Activated CD4-positive, alpha-beta memory T cell treated with anti-CD3 and anti-CD28 coated beads for 36 hours (primary cell): ENCODE measurements at regions of chr17 and their contacts with region 1.

Region 1: DNA sequence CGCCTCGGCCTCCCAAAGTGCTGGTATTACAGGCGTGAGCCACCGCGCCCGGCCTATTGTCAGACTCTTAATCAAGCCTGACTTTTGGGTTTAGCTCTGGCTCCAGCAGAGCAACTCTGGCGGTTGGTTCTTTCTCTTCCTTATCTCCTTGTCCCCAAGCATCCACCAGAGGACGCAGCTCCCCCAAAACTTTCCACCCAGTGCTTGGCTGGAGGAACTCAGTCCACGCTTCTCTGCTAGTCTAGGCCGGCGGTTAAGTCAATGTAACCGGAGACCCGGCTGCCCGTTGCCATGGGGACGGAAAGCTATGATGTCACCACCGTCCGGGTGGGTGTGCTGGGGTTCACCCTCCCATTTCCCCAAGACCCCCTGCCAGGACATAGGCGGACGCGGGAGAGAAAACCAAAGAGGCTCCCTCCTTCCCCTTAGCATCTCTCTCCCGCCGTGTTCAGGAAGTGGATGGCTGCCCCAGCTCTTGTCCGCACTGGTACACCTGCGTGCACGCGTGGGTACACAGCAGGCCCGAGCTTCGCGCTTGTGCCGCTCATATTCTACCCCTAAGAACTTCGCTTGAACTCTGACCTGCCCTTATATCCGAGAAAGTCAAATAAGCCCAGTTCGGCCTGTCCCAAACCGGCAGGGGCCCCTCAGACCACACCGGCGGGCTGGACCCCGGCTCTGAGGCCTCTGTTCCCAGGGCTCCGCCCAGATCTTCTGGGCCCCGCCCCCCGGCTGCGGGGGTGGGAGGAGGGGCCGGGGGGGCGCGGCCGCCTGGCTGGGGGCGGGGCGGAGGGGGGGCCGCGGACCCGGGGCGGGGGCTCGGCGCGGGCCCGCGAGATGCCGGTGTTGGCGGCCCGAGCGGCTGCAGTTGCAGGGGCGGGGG is at the start of gene RND2:
- DNase-seq: peak; percentile 88
- H3K4me3 Mint-ChIP-seq: peak within 1 kb of the TSS; percentile 74
- H3K27ac Mint-ChIP-seq: peak within 1 kb of the TSS; percentile 21
- H3K4me1 Mint-ChIP-seq: peaks cover 21% of the 10 kb centered on the region
- H3K27me3 Mint-ChIP-seq: no peaks in the 10 kb centered on the region
- total RNA-seq, gene RND2: 0.07 TPM in 1 of 2 experiments, not detected in the other

Region 2: DNA sequence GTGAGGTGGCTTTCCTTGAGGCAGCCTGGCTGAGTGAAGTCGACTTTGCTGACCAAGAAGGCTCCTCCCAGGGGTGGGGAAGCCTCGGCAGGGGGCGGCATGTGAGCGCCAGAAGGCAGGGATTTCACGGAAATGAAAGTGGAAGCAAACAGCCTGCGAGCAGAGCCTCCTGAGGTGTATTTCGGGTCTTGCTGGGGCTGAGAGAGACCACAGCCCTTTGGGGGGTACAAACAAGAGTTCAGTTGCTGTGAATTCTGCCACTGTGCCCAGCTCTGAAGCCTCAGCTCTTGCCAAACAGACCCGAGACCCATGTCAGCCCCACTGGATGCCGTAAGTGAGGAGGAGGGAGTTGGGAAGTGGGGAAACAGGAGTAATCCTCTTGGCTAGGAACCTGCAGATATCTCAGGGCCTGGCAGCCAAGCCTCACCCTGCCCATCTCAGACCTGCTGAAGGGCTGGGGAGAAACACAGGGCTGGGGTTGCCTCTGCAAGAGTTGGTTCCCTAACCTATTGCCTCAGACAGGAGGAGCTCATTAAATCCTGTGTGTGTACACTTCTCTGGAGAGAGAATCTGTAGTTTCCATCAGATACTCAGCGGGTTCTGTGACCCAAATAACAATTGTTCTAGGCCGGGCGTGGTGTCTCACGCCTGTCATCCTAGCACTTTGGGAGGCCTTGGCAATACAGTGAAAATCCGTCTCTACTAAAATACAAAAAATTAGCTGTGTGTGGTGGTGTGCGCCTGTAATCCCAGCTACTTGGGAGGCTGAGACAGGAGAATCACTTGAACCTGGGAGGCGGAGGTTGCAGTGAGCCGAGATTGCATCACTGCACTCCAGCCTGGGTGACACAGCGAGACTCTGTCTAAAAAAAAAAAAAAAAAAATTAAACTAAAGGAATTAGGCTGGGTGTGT is 17.8 kb before region 1 on chr17 and contains the start of gene IFI35:
- CTCF ChIA-PET with region 1: interaction called, 10 read pairs
- POLR2A ChIA-PET with region 1: interaction called, 4 read pairs
- intact Hi-C with region 1: loop called (anchors 2 kb)
- DNase-seq: peak; percentile 94
- H3K4me3 Mint-ChIP-seq: peak within 1 kb of the TSS; percentile 100
- H3K27ac Mint-ChIP-seq: peak within 1 kb of the TSS; percentile 99
- H3K4me1 Mint-ChIP-seq: peaks cover 17% of the 10 kb centered on the region
- H3K27me3 Mint-ChIP-seq: no peaks in the 10 kb centered on the region
- total RNA-seq, gene IFI35: 66.0 to 68.6 TPM

Region 3: GRCh38 chr17:43125133-43125966 is 100.7 kb after region 1 on chr17 and contains the start of gene BRCA1:
- CTCF ChIA-PET with region 1: interaction called, 3 read pairs
- POLR2A ChIA-PET with region 1: no interaction called
- intact Hi-C with region 1: loop called (anchors 10 kb)
- DNase-seq: peak; percentile 97
- H3K4me3 Mint-ChIP-seq: peak within 1 kb of the TSS; percentile 97
- H3K27ac Mint-ChIP-seq: peak within 1 kb of the TSS; percentile 95
- H3K4me1 Mint-ChIP-seq: peaks cover 34% of the 10 kb centered on the region
- H3K27me3 Mint-ChIP-seq: no peaks in the 10 kb centered on the region
- total RNA-seq, gene BRCA1: 92.8 to 103 TPM

Region 4: DNA sequence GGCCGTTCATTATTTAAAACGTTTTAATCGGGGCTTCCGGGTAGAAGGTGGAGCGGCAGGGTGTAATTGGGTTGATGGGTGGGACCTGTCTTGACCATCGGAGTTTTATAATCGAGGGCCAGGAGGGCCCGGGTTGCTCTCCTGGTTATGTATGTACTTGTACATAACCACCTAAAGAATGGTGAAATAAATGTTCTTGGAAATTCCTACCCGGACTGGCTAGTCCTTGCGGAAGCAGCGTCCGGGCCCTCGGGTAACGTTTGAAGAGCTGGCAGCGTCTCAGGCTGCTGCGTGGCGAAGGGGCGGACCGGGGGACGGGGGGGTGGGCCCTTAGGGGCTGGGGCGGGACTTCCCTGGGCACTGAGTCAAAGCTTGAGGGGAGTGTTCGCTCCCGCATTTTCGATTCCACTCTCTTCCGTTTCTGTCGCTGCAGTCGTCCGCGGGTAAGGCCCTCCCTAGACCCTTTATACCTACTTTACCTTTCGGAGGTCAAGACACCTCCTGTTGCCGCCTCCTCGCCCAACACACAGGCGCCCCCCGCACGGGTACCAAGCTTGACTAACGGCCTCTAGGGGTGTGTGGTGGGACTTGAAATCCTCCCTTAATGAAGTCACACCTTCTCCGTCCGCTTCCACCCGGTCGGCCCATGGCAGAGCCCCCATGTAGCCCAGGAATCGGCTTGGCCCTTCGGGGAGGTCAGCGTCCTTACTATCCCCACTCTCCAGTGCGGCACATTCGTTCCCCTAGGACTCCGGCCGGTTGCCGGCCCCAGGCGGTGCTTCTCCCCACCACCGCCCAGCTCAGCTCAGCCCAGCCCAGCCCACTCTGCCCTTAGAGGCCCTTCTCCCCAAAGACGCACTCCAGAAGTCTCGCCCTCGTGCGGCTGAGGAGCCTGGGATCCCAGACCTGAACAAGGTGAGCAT is 187.1 kb after region 1 on chr17 and contains the start of gene TMEM106A:
- CTCF ChIA-PET with region 1: interaction called, 3 read pairs
- POLR2A ChIA-PET with region 1: interaction called, 4 read pairs
- intact Hi-C with region 1: loop called (anchors 5 kb)
- DNase-seq: peak; percentile 85
- H3K4me3 Mint-ChIP-seq: peak within 1 kb of the TSS; percentile 88
- H3K27ac Mint-ChIP-seq: peak within 1 kb of the TSS; percentile 82
- H3K4me1 Mint-ChIP-seq: peaks cover 27% of the 10 kb centered on the region
- H3K27me3 Mint-ChIP-seq: no peaks in the 10 kb centered on the region
- total RNA-seq, gene TMEM106A: 10.1 to 10.4 TPM

Region 5: DNA sequence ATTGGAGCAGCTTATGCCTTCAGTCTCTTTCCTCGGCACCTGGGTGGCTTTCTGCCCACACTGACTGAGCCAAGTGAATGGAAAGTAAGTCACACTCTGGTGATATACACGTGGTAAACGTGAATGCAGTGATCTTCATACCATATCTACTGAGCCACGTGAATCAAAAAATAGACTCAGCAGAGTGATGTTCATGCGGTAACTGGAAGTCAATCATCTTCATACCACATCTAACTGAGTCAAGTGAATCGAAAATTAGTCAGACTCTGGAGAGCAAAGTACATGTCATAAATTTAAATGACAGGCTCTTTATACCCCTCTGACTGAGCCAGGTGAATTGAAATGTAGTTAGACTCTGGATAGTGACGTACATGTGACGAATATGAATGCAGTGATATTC is 327.0 kb after region 1 on chr17:
- CTCF ChIA-PET with region 1: no interaction called
- POLR2A ChIA-PET with region 1: no interaction called
- intact Hi-C with region 1: no loop called
- DNase-seq: peak; percentile 34
- H3K4me3 Mint-ChIP-seq: no peak overlapping the region
- H3K27ac Mint-ChIP-seq: no peak overlapping the region
- H3K4me1 Mint-ChIP-seq: peaks cover 14% of the 10 kb centered on the region
- H3K27me3 Mint-ChIP-seq: no peaks in the 10 kb centered on the region